Activated T-helper 1 cell treated with anti-CD3 and anti-CD28 coated beads, Interleukin-12 subunit alpha, Interleukin-12 subunit beta, Interleukin-2, Interleukin-4 antibody, amounts not matched to agents 30 ng/mL and 10 ng/mL and 1 ng/mL, durations not matched to agents 14 hours and 24 hours and 36 hours (primary cell): ENCODE measurements at regions of chr5 and their contacts with region 1.

Region 1: GRCh38 chr5:140639148-140639979 is at the start of gene TMCO6:
- DNase-seq: peak; percentile 91
- H3K4me3 Mint-ChIP-seq: peak within 1 kb of the TSS; percentile 93
- H3K27ac Mint-ChIP-seq: peak within 1 kb of the TSS; percentile 97
- H3K4me1 Mint-ChIP-seq: peaks cover 31% of the 10 kb centered on the region
- H3K27me3 Mint-ChIP-seq: peaks cover 2% of the 10 kb centered on the region
- total RNA-seq, gene TMCO6: 43.2 and 43.6 TPM in 2 replicates

Region 2: DNA sequence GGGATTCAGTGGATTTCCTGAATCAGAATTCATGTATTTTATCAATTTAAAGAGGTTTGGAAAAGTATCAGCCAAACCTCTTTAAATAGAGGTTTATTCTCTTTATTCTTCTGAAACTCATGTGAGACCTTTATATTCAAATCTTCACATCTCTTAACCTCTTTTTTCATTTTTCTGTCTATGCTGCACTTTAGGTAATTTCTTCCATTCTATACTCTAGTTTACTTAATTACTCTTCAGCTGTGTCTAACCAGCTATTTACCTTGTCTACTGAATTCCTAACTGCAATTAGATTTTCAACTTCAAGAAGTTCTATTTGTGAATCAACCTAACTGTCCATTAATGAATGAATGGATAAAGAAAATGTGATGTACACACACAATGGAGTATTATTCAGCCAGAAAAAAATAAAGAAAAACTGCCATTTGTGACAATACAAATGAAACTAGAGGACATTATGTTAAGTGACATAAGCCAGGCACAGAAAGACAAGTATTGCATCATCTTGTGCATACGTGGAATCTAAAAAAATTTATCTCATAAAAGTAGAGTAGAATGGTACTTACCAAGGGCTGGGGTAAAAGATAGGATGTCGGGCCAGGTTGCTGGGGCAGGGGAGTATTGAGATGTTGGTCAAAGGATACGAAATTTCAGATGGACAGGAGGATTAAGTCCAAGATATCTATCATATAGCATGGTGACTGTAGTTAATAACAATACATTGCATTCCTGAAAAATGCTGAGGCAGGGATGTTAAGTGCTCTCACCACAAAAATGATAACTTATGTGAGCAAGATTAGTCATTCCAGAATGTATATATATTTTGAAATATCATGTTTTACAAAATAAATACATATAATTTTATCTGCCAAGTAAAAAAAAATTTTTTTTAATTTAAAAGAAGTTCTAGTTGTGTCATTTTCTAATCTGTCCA is 1634.7 kb before region 1 on chr5:
- intact Hi-C with region 1: no loop called
- DNase-seq: no peak
- H3K4me3 Mint-ChIP-seq: no peak overlapping the region
- H3K27ac Mint-ChIP-seq: no peak overlapping the region
- H3K4me1 Mint-ChIP-seq: no peaks in the 10 kb centered on the region
- H3K27me3 Mint-ChIP-seq: no peaks in the 10 kb centered on the region

Region 3: DNA sequence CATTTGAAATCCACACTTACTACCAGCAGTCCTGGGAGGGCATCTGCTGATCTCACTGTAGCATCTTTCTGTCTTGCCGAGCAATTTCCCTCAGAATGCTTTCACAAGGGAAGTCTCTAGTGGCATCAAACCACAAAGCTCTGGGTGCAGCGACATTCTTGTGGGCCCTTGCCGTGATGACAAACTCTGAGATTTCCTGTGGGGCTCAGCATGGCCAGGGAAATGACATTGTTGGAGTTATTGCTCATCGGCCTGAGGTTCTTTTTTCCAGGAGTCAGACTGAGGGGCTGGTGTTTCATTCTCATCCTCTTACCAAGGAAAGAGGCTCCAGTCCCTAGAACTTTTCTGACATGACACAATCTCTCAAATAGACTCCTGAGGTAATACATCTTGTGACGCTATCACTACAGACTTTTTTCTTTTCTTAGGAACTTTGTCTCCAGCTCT is 387.8 kb before region 1 on chr5:
- intact Hi-C with region 1: loop called (anchors 5 kb)
- DNase-seq: peak; percentile 69
- H3K4me3 Mint-ChIP-seq: peak overlapping the region; percentile 66
- H3K27ac Mint-ChIP-seq: peak overlapping the region; percentile 78
- H3K4me1 Mint-ChIP-seq: peaks cover 58% of the 10 kb centered on the region
- H3K27me3 Mint-ChIP-seq: no peaks in the 10 kb centered on the region

Region 4: DNA sequence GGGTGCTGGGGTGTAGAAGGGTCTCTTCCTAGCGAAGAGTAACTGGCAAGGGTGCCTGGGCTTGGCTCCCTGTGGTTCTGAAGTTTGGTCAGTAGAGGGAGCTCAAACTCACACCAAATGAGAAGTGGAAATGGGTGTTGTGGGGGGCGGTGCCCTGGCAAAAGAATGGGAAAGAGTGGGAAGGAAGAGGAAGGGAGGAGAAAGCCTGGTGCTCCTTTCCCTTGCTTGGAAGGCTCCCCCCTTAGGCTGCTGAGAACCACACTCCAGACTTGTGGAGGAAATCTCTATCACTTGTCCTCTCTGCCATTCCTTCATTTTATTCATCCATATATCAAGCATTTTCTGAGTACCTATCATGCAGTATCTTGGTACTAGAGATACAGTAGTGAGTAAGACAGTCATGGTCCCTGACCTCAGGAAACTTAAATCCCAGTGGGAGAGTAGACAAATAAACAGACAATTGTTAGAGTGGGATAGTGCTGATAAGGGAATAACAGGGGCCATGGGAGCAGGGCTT is 266.3 kb before region 1 on chr5:
- intact Hi-C with region 1: loop called (anchors 1 kb)
- DNase-seq: peak; percentile 21
- H3K4me3 Mint-ChIP-seq: no peak overlapping the region
- H3K27ac Mint-ChIP-seq: no peak overlapping the region
- H3K4me1 Mint-ChIP-seq: no peaks in the 10 kb centered on the region
- H3K27me3 Mint-ChIP-seq: no peaks in the 10 kb centered on the region

Region 5: DNA sequence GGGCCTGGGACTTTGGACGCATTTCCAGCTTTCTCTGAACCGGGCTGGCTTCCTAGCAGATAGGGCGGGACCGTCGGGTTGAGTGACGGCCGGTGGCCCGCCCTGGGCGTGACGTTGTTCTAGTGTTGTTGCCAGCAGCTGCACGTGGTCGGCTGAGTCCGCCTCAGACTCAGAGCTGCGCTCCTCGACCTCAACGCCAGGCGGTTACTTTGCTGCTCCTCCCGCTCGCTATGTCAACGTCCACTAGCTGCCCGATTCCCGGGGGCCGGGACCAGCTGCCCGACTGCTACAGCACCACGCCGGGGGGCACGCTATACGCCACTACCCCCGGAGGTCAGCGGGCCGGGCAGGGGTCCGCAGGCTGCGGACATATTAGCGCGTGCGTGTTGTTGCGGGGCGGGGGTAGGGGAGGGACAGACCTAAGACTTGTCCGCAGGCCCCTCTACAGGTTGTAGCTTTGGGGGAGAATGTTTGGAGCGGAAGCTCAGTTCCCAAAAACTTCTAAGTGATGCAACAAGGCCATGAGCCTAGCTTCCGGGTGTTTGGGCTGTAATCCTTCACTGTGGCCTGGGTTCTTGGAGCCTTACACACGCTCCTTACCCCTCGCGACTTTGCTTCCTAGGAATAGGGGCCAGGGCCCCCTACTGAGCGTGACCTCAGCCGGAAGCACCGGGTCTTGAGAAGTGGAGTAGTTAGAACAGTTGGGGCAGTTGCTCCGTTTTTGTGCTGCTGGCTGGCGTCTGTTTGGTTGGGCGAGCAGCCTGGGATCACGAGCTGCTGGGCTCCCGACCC is 91.7 kb before region 1 on chr5 and contains the start of gene EIF4EBP3:
- intact Hi-C with region 1: loop called (anchors 1 kb)
- DNase-seq: peak; percentile 81
- H3K4me3 Mint-ChIP-seq: peak within 1 kb of the TSS; percentile 80
- H3K27ac Mint-ChIP-seq: peak within 1 kb of the TSS; percentile 82
- H3K4me1 Mint-ChIP-seq: peaks cover 48% of the 10 kb centered on the region
- H3K27me3 Mint-ChIP-seq: no peaks in the 10 kb centered on the region
- total RNA-seq, gene EIF4EBP3: 12.7 and 16.1 TPM in 2 replicates

Region 6: DNA sequence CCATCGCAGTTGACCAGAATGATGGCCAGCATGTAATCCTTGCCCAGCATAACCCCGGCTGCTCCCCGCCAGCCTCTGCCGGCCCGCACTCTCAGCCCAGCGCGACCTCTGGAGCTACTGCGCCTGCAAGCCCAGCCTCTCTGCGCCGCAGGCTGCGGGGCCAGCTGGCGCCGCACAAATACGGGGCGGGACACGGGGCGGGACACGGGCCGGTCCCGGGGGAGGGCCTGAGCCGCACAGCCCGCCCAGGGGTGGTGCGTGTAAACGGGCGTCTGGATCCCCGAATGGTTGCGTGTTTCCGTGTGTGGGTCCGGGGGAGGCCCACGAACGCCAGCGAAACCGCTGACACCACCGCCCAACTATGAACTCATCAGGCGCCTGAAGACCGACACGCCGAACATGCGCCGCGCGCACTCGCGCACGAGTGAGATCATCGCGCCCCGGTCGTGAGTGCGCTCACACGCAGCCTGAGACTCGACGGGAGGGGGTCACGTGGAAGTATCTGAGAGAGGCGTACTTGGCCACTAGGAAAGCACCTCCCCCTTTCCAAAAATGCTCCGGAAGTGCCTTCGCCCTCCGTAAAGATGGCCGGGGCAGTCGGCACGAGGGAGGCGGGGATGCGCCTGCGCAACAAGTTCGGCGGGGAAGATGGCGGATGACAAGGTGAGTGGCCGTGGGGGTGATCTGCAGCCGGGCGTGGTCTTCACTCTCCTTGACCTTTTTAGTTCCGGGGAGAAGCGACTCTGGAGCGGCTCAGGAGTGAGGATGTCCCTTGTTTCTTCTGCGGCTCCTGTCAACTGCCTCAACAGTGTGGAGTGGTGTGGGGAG is 75.0 kb before region 1 on chr5 and contains the starts of genes APBB3 and SLC35A4:
- intact Hi-C with region 1: loop called (anchors 1 kb)
- DNase-seq: peak; percentile 98
- H3K4me3 Mint-ChIP-seq: peak within 1 kb of the TSS; percentile 95
- H3K27ac Mint-ChIP-seq: peak within 1 kb of the TSS; percentile 96
- H3K4me1 Mint-ChIP-seq: peaks cover 54% of the 10 kb centered on the region
- H3K27me3 Mint-ChIP-seq: no peaks in the 10 kb centered on the region
- total RNA-seq, gene APBB3: 17.2 and 21.2 TPM in 2 replicates
- total RNA-seq, gene SLC35A4: 94.3 and 107 TPM in 2 replicates

Region 7: GRCh38 chr5:140690941-140691924 is 51.9 kb after region 1 on chr5 and contains the starts of genes HARS1 and HARS2:
- intact Hi-C with region 1: loop called (anchors 1 kb)
- DNase-seq: peak; percentile 81
- H3K4me3 Mint-ChIP-seq: peak within 1 kb of the TSS; percentile 100
- H3K27ac Mint-ChIP-seq: peak within 1 kb of the TSS; percentile 95
- H3K4me1 Mint-ChIP-seq: peaks cover 50% of the 10 kb centered on the region
- H3K27me3 Mint-ChIP-seq: no peaks in the 10 kb centered on the region
- total RNA-seq, gene HARS1: 112 and 114 TPM in 2 replicates
- total RNA-seq, gene HARS2: 31.2 and 32.7 TPM in 2 replicates